ENCODE measurements at regions of chr1 and their contacts with region 1.

Region 1: GRCh38 chr1:154183045-154183915 is 8.6 kb downstream of the TPM3 start:
- DNase-seq: peak; percentile 91 to 98 (median 96)
- H3K4me3 ChIP-seq: peak overlapping the region; percentile 66 to 99 (median 93)
- H3K27ac ChIP-seq: peak overlapping the region in 58 of 59 donors; percentile 46 to 96 (median 86)
- H3K27me3 ChIP-seq: no peaks in the 10 kb centered on the region
- CTCF ChIP-seq: peak in 46 of 56 donors; percentile 3 to 54 (median 32)

Region 2: GRCh38 chr1:154220071-154220969 is 37.0 kb after region 1 on chr1 and contains the start of gene UBAP2L:
- intact Hi-C with region 1: loop called (anchors 2 to 5 kb)
- DNase-seq: peak; percentile 96 to 99 (median 98)
- H3K4me3 ChIP-seq: peak within 1 kb of the TSS; percentile 71 to 100 (median 93)
- H3K27ac ChIP-seq: peak within 1 kb of the TSS; percentile 91 to 100 (median 99)
- H3K27me3 ChIP-seq: no peaks in the 10 kb centered on the region
- CTCF ChIP-seq: peak in 15 of 56 donors; percentile 6 to 52 (median 16)
- total RNA-seq, gene UBAP2L: 100 to 166 (median 130) TPM

Measured in dorsolateral prefrontal cortex (tissue), 120 donors.